ENCODE measurements at regions of chr19 and their contacts with region 1.

Region 1: DNA sequence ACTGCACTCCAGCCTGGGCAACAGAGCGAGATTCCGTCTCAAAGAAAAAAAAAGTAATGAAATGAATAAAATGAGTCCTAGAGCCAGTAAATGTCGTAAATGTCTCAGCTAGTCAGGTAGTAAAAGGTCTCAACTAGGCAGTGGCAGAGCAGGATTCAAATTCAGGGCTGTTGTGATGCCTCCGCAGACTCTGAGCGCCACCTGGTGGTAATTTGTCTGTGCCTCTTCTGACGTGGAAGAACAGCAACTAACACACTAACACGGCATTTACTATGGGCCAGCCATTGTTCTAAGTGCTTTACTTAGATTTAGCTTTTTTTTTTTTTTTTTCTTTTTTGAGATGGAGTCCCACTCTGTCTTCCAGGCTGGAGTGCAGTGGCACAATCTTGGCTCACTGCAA is 30.2 kb downstream of the CYP2F1 start:
- DNase-seq: peak; percentile 42
- ATAC-seq: peak; percentile 64
- H3K4me3 Mint-ChIP-seq: no peak overlapping the region
- H3K27ac Mint-ChIP-seq: no peak overlapping the region
- H3K4me1 Mint-ChIP-seq: no peaks in the 10 kb centered on the region
- H3K27me3 Mint-ChIP-seq: peaks cover 9% of the 10 kb centered on the region
- CTCF ChIP-seq: peak; percentile 63

Region 2: GRCh38 chr19:40542202-40542859 is 602.1 kb before region 1 on chr19:
- CTCF ChIA-PET with region 1: no interaction called
- POLR2A ChIA-PET with region 1: no interaction called
- intact Hi-C with region 1: loop called (anchors 5 kb)
- DNase-seq: no peak
- ATAC-seq: no peak
- H3K4me3 Mint-ChIP-seq: no peak overlapping the region
- H3K27ac Mint-ChIP-seq: no peak overlapping the region
- H3K4me1 Mint-ChIP-seq: no peaks in the 10 kb centered on the region
- H3K27me3 Mint-ChIP-seq: peaks cover 7% of the 10 kb centered on the region
- CTCF ChIP-seq: no peak

Region 3: DNA sequence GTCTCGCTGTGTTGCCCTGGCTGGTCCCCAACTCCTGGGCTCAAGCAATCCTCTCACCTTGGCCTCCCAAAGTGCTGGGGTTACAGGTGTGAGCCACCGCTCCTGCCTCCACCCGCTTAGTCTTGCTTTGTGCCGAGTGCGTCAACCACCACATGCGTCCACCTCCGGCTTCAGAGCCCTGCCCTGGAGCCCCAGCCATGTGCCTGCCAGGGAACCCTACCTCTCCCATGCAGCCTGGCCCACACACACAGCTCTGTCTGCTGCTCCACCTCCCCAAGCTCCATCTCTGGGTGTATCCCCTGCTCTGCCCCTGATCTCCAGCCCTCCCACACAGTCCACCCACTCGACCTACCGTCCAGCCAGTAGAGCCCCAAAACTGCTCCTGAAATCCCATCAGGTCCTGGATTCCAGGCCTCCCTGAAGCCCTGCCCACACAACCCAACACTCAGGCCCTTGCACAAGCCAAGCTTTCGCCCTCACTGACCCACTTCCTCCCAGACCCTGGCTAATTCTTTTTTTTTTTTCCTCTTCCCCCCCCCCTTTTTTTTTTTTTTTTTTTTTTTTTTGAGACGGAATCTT is 20.6 kb before region 1 on chr19:
- CTCF ChIA-PET with region 1: interaction called, 11 read pairs
- POLR2A ChIA-PET with region 1: interaction called, 8 read pairs
- intact Hi-C with region 1: loop called (anchors 1 kb)
- DNase-seq: no peak
- ATAC-seq: no peak
- H3K4me3 Mint-ChIP-seq: no peak overlapping the region
- H3K27ac Mint-ChIP-seq: no peak overlapping the region
- H3K4me1 Mint-ChIP-seq: peaks cover 16% of the 10 kb centered on the region
- H3K27me3 Mint-ChIP-seq: peaks cover 19% of the 10 kb centered on the region
- CTCF ChIP-seq: no peak

Region 4: DNA sequence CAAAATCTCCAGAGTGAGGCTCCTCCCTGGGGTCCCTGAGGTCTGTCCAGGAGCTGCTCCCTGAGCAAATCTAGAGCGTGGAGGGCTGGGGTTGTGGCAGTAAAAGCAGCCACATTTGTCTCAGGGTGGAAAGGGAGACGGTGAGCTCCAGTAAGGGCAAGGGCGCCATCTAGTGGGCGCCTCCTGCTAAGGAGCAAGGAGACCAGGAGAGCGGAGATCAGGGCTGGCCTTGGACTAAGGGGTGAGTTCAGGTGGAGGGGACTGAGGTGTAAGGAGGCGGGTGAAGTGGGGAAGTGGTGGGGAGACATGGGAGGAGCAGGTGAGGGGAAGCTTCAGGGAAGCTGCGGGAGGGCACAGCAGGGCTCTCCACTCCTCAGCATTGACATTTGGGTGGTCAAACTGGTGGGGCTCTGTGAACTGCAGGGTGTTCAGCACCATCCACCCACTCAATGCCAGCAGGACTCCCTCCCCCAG is 426.3 kb after region 1 on chr19:
- CTCF ChIA-PET with region 1: no interaction called
- POLR2A ChIA-PET with region 1: no interaction called
- intact Hi-C with region 1: loop called (anchors 10 kb)
- DNase-seq: peak; percentile 77
- ATAC-seq: peak; percentile 97
- H3K4me3 Mint-ChIP-seq: no peak overlapping the region
- H3K27ac Mint-ChIP-seq: no peak overlapping the region
- H3K4me1 Mint-ChIP-seq: peaks cover 14% of the 10 kb centered on the region
- H3K27me3 Mint-ChIP-seq: peaks cover 2% of the 10 kb centered on the region
- CTCF ChIP-seq: peak; percentile 50

Measured in activated B cell treated with CpG ODN at 0.5 μM for 24 hours (primary cell).